ENCODE measurements at regions of chr3 and their contacts with region 1.

Region 1: GRCh38 chr3:55897573-55898224 is 410.6 kb upstream of the WNT5A start:
- DNase-seq: peak; percentile 45
- H3K4me3 ChIP-seq: no peak overlapping the region
- H3K27ac ChIP-seq: no peak overlapping the region
- H3K4me1 ChIP-seq: no peaks in the 10 kb centered on the region
- CTCF ChIP-seq: peak; percentile 79

Region 2: DNA sequence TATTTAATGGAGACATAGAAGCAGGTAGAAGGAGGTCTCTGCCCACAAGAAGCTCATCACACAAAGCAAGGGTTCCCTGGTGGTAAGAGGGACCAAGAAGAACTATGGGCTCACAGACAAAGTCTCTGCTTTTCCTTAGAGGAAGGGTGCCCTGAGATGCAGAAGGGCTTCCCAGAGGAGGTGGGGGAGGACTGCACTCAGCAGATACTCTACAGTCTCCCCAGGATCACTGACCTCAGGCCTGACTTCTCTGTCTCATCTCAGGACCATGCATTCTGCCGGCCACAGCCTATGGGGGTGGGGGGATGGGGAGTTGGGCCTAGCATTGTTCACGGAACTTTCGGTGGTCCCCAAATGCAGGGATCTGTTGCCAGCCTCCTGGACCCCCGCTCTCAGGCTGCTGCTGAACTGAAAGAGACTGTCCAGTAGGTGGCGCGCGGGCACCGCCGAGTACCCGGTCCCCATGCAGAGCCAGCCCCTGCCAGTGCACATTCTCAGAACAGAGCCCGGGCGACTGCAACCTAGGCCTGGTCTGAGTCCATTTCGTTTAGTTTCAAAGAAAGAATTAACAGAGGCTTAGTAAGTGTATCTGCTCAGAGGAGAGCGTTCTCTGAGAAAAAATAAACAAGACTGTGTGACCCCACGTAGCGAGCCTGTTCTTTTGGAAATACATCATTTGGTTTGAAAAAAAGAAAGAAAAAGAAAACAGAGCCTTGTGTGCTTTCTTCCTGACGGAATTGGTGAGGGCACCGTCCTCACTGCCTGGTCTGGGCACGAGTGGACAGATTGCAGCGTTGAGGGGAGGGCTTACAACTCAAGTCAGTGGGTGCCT is 1043.9 kb before region 1 on chr3:
- CTCF ChIA-PET with region 1: no interaction called
- POLR2A ChIA-PET with region 1: no interaction called
- intact Hi-C with region 1: loop called (anchors 5 kb)
- DNase-seq: peak; percentile 60
- H3K4me3 ChIP-seq: no peak overlapping the region
- H3K27ac ChIP-seq: no peak overlapping the region
- H3K4me1 ChIP-seq: no peaks in the 10 kb centered on the region
- CTCF ChIP-seq: peak; percentile 90

Region 3: DNA sequence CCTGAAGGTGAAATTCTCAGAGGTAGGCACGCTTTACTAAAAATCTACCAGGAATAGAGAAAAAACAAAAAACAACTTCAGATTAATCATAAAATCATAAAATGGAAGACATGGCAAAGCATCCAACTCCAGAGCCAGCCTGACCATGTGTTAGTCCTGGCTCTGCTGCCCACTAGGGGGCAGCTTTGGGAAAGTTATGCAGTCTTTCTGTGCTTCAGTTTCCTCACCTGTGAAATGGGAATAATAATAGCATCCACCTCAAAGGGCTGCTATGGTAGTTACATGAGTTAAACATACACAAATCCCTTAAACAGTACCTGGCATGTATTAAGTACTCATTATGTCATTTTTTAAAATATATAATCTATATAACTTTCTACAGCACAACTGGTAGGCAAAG is 462.9 kb before region 1 on chr3:
- CTCF ChIA-PET with region 1: no interaction called
- POLR2A ChIA-PET with region 1: no interaction called
- intact Hi-C with region 1: loop called (anchors 1 kb)
- DNase-seq: peak; percentile 71
- H3K4me3 ChIP-seq: no peak overlapping the region
- H3K27ac ChIP-seq: no peak overlapping the region
- H3K4me1 ChIP-seq: no peaks in the 10 kb centered on the region
- CTCF ChIP-seq: peak; percentile 95

Region 4: GRCh38 chr3:55567615-55568014 is 330.1 kb before region 1 on chr3:
- CTCF ChIA-PET with region 1: no interaction called
- POLR2A ChIA-PET with region 1: no interaction called
- intact Hi-C with region 1: loop called (anchors 10 kb)
- DNase-seq: no peak
- H3K4me3 ChIP-seq: no peak overlapping the region
- H3K27ac ChIP-seq: no peak overlapping the region
- H3K4me1 ChIP-seq: no peaks in the 10 kb centered on the region
- CTCF ChIP-seq: no peak

Region 5: GRCh38 chr3:55746808-55747413 is 150.8 kb before region 1 on chr3:
- CTCF ChIA-PET with region 1: no interaction called
- POLR2A ChIA-PET with region 1: no interaction called
- intact Hi-C with region 1: loop called (anchors 5 kb)
- DNase-seq: peak; percentile 67
- H3K4me3 ChIP-seq: no peak overlapping the region
- H3K27ac ChIP-seq: peak overlapping the region; percentile 12
- H3K4me1 ChIP-seq: peaks cover 19% of the 10 kb centered on the region
- CTCF ChIP-seq: peak; percentile 87